ENCODE measurements at regions of chr17 and their contacts with region 1.

Region 1: GRCh38 chr17:2282297-2282873 is 21.2 kb downstream of the SMG6 start:
- DNase-seq: peak in 2 of 9 experiments; percentile 71 to 81
- ATAC-seq: peak; percentile 77
- H3K4me3 ChIP-seq: no peak overlapping the region
- H3K4me3 Mint-ChIP-seq: no peak overlapping the region
- H3K27ac ChIP-seq: no peak overlapping the region
- H3K27ac Mint-ChIP-seq: peak overlapping the region; percentile 53
- H3K4me1 ChIP-seq: peaks cover 9% of the 10 kb centered on the region
- H3K4me1 Mint-ChIP-seq: peaks cover 21% of the 10 kb centered on the region
- H3K27me3 ChIP-seq: no peaks in the 10 kb centered on the region
- H3K27me3 Mint-ChIP-seq: no peaks in the 10 kb centered on the region
- CTCF ChIP-seq: peak; percentile 84

Region 2: DNA sequence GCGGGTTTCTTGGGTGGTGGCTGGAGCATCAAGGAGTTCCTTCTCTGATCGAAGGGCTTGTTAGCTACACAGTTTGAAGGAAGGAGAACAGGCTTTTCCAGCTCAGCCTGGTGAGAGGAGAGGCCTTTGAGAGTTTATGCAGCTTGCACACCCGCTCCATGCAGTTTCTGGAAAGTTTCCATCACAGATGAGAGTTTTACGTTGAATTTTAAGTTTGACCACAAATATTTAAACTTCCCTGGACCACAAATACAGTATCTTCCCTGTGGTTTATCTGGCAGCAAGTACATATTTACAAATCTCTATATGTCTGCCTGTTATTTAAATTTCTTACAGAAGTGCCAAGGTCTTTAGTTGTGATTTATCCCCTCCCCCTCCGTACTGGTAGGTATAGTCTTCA is 170.7 kb before region 1 on chr17:
- CTCF ChIA-PET with region 1: no interaction called
- POLR2A ChIA-PET with region 1: no interaction called
- intact Hi-C with region 1: no loop called
- DNase-seq: no peak
- ATAC-seq: no peak
- H3K4me3 ChIP-seq: no peak overlapping the region
- H3K4me3 Mint-ChIP-seq: no peak overlapping the region
- H3K27ac ChIP-seq: no peak overlapping the region
- H3K27ac Mint-ChIP-seq: no peak overlapping the region
- H3K4me1 ChIP-seq: no peaks in the 10 kb centered on the region
- H3K4me1 Mint-ChIP-seq: no peaks in the 10 kb centered on the region
- H3K27me3 ChIP-seq: no peaks in the 10 kb centered on the region
- H3K27me3 Mint-ChIP-seq: no peaks in the 10 kb centered on the region
- CTCF ChIP-seq: no peak

Region 3: GRCh38 chr17:2259769-2260536 is 22.4 kb before region 1 on chr17:
- CTCF ChIA-PET with region 1: interaction called, 21 read pairs
- POLR2A ChIA-PET with region 1: interaction called, 7 read pairs
- intact Hi-C with region 1: no loop called
- DNase-seq: peak; percentile 7 to 87 (median 61)
- ATAC-seq: peak; percentile 55
- H3K4me3 ChIP-seq: peak overlapping the region in 1 of 2 experiments; percentile 21
- H3K4me3 Mint-ChIP-seq: peak overlapping the region; percentile 59
- H3K27ac ChIP-seq: peak overlapping the region; percentile 43 to 74
- H3K27ac Mint-ChIP-seq: peak overlapping the region; percentile 95
- H3K4me1 ChIP-seq: peaks cover 67% of the 10 kb centered on the region
- H3K4me1 Mint-ChIP-seq: peaks cover 69% of the 10 kb centered on the region
- H3K27me3 ChIP-seq: no peaks in the 10 kb centered on the region
- H3K27me3 Mint-ChIP-seq: no peaks in the 10 kb centered on the region
- CTCF ChIP-seq: no peak